CD8-positive, alpha-beta T cell (primary cell): ENCODE measurements at regions of chr17 and their contacts with region 1.

Region 1: DNA sequence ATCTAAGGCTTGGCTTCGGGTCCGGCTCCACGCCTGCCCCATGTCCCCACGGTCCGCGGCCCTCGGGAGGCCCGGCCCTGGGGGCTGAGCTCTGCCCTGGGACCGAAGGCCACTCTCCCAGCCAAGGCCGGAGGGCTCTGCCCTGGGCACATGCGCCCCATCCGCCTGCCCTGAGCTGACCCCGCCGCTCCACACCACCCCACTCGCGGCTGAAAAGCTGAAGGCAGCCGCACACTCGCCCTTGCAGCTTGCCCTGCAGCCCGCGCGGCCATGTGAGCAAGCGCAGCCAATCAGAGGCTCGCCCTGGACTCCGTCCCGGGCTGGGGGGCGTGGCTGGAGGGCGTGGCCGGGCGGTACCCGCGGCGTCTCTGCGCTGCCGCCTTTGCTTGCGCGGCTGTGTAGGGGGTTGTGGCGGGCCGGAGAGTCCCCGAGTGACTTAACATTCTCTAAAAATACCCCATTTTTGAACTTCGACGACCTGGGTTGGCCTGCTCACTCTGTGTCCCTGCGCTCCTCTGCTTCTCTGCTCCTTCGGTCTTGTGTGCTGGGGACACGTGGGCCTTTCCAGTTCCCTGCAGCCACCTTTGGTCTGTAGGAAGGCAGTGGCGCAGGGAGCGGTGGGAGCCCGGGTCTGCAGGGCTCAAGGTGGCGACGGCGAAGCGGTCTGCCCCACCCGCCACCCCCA is 8.8 kb upstream of the MAP2K3 start:
- DNase-seq: peak; percentile 83 to 98 (median 94)
- ATAC-seq: peak; percentile 84
- H3K4me3 ChIP-seq: peak overlapping the region; percentile 60 to 80
- H3K4me3 Mint-ChIP-seq: peak overlapping the region; percentile 87
- H3K27ac ChIP-seq: peak overlapping the region; percentile 57 to 75
- H3K27ac Mint-ChIP-seq: peak overlapping the region; percentile 90
- H3K4me1 ChIP-seq: peaks cover 37% of the 10 kb centered on the region
- H3K4me1 Mint-ChIP-seq: peaks cover 42% of the 10 kb centered on the region
- H3K27me3 ChIP-seq: no peaks in the 10 kb centered on the region
- H3K27me3 Mint-ChIP-seq: no peaks in the 10 kb centered on the region
- CTCF ChIP-seq: no peak

Region 2: GRCh38 chr17:20981046-20981920 is 294.4 kb before region 1 on chr17:
- CTCF ChIA-PET with region 1: no interaction called
- POLR2A ChIA-PET with region 1: no interaction called
- intact Hi-C with region 1: no loop called
- DNase-seq: no peak
- ATAC-seq: no peak
- H3K4me3 ChIP-seq: no peak overlapping the region
- H3K4me3 Mint-ChIP-seq: no peak overlapping the region
- H3K27ac ChIP-seq: no peak overlapping the region
- H3K27ac Mint-ChIP-seq: no peak overlapping the region
- H3K4me1 ChIP-seq: no peaks in the 10 kb centered on the region
- H3K4me1 Mint-ChIP-seq: no peaks in the 10 kb centered on the region
- H3K27me3 ChIP-seq: no peaks in the 10 kb centered on the region
- H3K27me3 Mint-ChIP-seq: peaks cover 25% of the 10 kb centered on the region
- CTCF ChIP-seq: no peak

Region 3: GRCh38 chr17:21201298-21201595 is 74.5 kb before region 1 on chr17:
- CTCF ChIA-PET with region 1: no interaction called
- POLR2A ChIA-PET with region 1: no interaction called
- intact Hi-C with region 1: no loop called
- DNase-seq: no peak
- ATAC-seq: no peak
- H3K4me3 ChIP-seq: no peak overlapping the region
- H3K4me3 Mint-ChIP-seq: no peak overlapping the region
- H3K27ac ChIP-seq: no peak overlapping the region
- H3K27ac Mint-ChIP-seq: no peak overlapping the region
- H3K4me1 ChIP-seq: no peaks in the 10 kb centered on the region
- H3K4me1 Mint-ChIP-seq: peaks cover 53% of the 10 kb centered on the region
- H3K27me3 ChIP-seq: no peaks in the 10 kb centered on the region
- H3K27me3 Mint-ChIP-seq: no peaks in the 10 kb centered on the region
- CTCF ChIP-seq: no peak

Region 4: DNA sequence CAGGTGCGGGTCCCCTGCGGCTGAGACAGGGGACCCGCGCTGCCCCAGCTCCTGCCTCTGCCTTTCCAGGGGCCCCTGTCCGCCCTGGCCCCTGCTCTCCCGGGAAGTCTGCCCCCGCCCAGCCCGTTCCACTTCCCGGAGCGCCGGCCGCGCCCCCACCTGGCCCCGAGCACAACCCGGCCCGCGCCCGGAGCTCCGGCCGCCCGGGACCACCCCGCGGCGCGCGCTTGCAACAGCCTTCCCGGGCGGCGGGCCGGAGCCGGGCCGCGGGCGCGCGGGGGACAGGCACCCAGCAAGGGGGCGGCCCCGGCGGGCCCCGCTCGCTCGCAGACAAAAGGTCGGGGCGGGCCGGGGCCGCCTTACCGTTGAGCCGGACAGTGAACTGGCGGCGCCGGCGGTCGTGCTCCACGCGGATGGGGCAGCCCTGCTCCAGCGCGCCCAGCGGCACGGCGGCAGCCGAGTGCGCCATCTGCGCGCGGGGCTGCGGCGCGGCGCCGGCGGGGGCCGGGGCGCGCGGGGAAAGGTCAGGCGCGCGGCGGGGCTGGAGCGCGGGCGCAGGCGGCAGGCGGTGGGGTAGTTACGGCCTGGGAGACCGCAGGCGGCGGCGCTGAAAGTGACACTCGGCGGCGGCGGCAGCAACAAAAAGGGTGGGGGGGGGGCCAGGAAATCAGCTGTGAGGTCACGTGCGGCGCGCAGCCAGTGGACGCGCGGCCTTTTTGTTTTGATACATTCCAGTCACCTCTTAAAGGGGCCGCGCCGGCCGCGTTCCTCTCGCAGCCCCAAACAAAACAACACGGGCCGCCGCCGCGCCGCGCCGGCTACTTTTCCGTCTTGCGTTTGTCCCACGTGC is 22.7 kb before region 1 on chr17 and contains the start of gene NATD1:
- CTCF ChIA-PET with region 1: interaction called, 4 read pairs
- POLR2A ChIA-PET with region 1: interaction called, 5 read pairs
- intact Hi-C with region 1: loop called (anchors 1 to 2 kb)
- DNase-seq: peak; percentile 54 to 92 (median 80)
- ATAC-seq: peak; percentile 79
- H3K4me3 ChIP-seq: peak within 1 kb of the TSS; percentile 55 to 73
- H3K4me3 Mint-ChIP-seq: peak within 1 kb of the TSS; percentile 86
- H3K27ac ChIP-seq: peak within 1 kb of the TSS; percentile 62 to 64
- H3K27ac Mint-ChIP-seq: peak within 1 kb of the TSS; percentile 92
- H3K4me1 ChIP-seq: peaks cover 17% of the 10 kb centered on the region
- H3K4me1 Mint-ChIP-seq: peaks cover 34% of the 10 kb centered on the region
- H3K27me3 ChIP-seq: no peaks in the 10 kb centered on the region
- H3K27me3 Mint-ChIP-seq: no peaks in the 10 kb centered on the region
- CTCF ChIP-seq: no peak
- total RNA-seq, gene NATD1: 6.3 to 6.6 TPM